Activated CD4-positive, alpha-beta memory T cell treated with anti-CD3 and anti-CD28 coated beads, Interleukin-2, amount 10 ng/mL, durations not matched to agents 7 days and 5 days (primary cell): ENCODE measurements at regions of chr2 and their contacts with region 1.

Region 1: DNA sequence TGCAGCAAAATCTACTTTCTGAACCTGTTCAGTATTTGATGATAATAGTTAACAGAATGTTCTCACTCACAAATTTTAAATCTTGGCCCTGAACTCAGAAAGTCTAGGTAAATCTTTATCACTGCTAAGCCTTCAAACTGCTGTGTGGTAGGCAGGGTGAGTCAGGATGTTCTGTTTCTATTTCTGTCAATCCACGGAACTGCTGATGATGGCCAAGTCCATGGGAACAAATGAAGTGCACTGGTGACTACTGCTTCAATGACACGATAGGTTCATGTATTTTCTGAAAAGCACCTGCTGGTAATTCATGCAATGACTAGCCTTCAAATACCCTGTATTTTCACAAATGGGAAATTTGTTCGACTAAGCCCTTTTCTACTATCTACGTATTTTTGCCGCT is 14.2 kb downstream of the NIFK start:
- DNase-seq: peak; percentile 52
- H3K4me3 Mint-ChIP-seq: peak overlapping the region; percentile 25
- H3K27ac Mint-ChIP-seq: peak overlapping the region; percentile 92
- H3K4me1 Mint-ChIP-seq: peaks cover 38% of the 10 kb centered on the region
- H3K27me3 Mint-ChIP-seq: no peaks in the 10 kb centered on the region

Region 2: GRCh38 chr2:121400201-121400600 is 322.3 kb before region 1 on chr2:
- CTCF ChIA-PET with region 1: interaction called, 11 read pairs
- POLR2A ChIA-PET with region 1: interaction called, 3 read pairs
- DNase-seq: no peak
- H3K4me3 Mint-ChIP-seq: no peak overlapping the region
- H3K27ac Mint-ChIP-seq: no peak overlapping the region
- H3K4me1 Mint-ChIP-seq: peaks cover 2% of the 10 kb centered on the region
- H3K27me3 Mint-ChIP-seq: no peaks in the 10 kb centered on the region

Region 3: DNA sequence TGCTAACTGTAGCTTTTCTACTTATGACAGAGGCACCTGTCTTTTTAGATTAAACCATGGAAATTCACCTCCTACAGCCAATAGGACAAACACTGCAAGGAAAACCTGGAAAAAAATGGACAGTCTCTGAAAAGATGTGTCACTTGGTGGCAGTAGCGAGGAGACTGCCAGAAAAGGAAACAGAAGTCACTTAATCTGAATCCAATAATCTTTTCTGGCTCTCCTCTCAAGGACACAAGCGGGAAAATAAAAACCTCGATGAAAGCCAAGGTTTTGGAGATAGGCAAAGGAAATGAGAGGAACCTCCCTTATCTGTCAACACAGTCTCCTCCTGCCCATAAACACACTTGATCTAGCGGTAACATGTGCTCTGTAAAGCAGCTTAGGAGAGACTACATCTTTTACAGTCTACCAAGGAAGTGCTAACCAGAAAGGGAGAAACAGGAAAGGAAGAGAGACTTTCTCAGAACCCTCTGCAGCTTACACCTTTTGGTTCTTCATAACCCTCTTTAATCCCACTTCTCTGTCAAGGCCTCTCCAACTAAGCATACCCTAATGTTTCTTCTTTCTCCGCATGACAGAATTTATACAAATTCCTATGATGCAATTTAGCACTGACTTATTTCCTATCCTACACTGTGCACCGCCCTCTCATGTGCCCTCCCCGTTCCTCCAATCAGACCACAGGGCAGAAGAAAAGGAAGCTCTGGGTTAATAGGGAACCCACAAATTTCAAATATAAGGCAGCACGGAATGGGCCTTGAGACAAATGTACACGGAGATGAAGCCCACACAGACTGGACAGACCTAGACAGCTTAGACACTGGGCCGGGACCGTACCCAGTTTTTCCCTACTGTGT is 126.0 kb before region 1 on chr2:
- CTCF ChIA-PET with region 1: interaction called, 10 read pairs
- POLR2A ChIA-PET with region 1: no interaction called
- DNase-seq: peak; percentile 22
- H3K4me3 Mint-ChIP-seq: peak overlapping the region; percentile 30
- H3K27ac Mint-ChIP-seq: peak overlapping the region; percentile 82
- H3K4me1 Mint-ChIP-seq: peaks cover 44% of the 10 kb centered on the region
- H3K27me3 Mint-ChIP-seq: no peaks in the 10 kb centered on the region

Region 4: GRCh38 chr2:121617042-121617599 is 105.4 kb before region 1 on chr2:
- CTCF ChIA-PET with region 1: no interaction called
- POLR2A ChIA-PET with region 1: no interaction called
- DNase-seq: no peak
- H3K4me3 Mint-ChIP-seq: no peak overlapping the region
- H3K27ac Mint-ChIP-seq: no peak overlapping the region
- H3K4me1 Mint-ChIP-seq: peaks cover 2% of the 10 kb centered on the region
- H3K27me3 Mint-ChIP-seq: no peaks in the 10 kb centered on the region

Region 5: DNA sequence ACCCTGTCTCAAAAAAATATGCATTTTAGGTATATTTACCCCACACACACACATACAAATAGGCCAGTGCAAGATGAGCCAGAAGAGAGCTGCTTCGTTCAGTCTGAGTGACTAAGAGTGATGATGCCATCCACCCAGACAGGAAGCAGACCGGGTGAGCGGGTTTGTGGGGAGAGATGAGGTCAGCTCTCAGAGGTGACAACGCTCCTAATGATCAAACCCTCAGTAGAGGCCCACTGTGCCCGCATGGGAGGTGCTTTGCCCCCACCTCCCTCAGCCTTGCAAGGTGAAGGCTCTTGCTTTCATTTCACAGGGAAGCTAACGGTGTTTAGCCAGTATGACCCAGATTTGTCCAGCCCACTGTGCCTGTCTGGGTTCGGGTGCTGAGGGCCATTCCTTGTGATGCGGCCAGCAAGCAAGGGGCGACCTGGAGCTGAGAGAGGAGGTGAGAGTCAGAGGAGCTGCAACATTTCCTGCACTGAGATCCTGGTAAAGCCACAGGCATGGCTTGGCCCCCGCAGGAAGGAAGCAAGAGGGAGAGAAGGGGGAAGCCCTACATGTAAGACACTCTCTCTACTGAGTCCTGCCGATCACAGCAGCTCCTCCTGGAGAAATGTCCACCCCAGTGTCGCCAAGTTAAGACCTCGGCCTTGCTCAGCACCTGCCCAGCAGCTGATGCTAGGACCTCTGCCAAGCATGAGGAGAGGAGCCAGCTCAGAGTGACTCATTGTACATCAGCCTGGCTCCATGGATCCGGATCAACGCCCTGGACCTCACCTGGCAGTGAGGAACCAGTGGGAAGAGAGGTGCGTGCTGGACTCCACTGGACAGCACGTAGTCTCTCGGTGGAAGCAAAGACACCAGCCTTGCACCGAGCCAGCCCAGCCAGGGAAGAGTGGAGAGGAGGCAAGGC is 22.8 kb before region 1 on chr2:
- CTCF ChIA-PET with region 1: interaction called, 7 read pairs
- POLR2A ChIA-PET with region 1: interaction called, 14 read pairs
- DNase-seq: peak; percentile 95
- H3K4me3 Mint-ChIP-seq: peak overlapping the region; percentile 79
- H3K27ac Mint-ChIP-seq: peak overlapping the region; percentile 97
- H3K4me1 Mint-ChIP-seq: peaks cover 50% of the 10 kb centered on the region
- H3K27me3 Mint-ChIP-seq: no peaks in the 10 kb centered on the region